Endothelial cell of umbilical vein (primary cell): ENCODE measurements at regions of chr6 and their contacts with region 1.

Region 1: GRCh38 chr6:27893059-27893835 is 18.9 kb downstream of the OR2B2 start:
- DNase-seq: peak; percentile 98
- H3K4me3 ChIP-seq: peak overlapping the region; percentile 65 to 98 (median 86)
- H3K27ac ChIP-seq: peak overlapping the region; percentile 94
- H3K4me1 ChIP-seq: peaks cover 22% of the 10 kb centered on the region
- H3K27me3 ChIP-seq: no peaks in the 10 kb centered on the region
- CTCF ChIP-seq: no peak
- POLR2A ChIP-seq: peak; percentile 96

Region 2: GRCh38 chr6:26031595-26032339 is 1861.5 kb before region 1 on chr6:
- CTCF ChIA-PET with region 1: interaction called, 4 read pairs
- POLR2A ChIA-PET with region 1: interaction called, 3 read pairs
- dilution Hi-C with region 1: no loop called
- intact Hi-C with region 1: loop called (anchors 5 kb)
- DNase-seq: peak; percentile 96
- H3K4me3 ChIP-seq: peak overlapping the region; percentile 45 to 78 (median 47)
- H3K27ac ChIP-seq: peak overlapping the region; percentile 88
- H3K4me1 ChIP-seq: peaks cover 33% of the 10 kb centered on the region
- H3K27me3 ChIP-seq: no peaks in the 10 kb centered on the region
- CTCF ChIP-seq: peak in 1 of 2 donors; percentile 29
- POLR2A ChIP-seq: peak; percentile 99

Region 3: GRCh38 chr6:27146706-27147505 is 746.3 kb before region 1 on chr6:
- CTCF ChIA-PET with region 1: interaction called, 3 read pairs
- POLR2A ChIA-PET with region 1: interaction called, 26 read pairs
- dilution Hi-C with region 1: no loop called
- intact Hi-C with region 1: loop called (anchors 1 kb)
- DNase-seq: peak; percentile 99
- H3K4me3 ChIP-seq: peak overlapping the region in 2 of 3 experiments; percentile 21 to 46
- H3K27ac ChIP-seq: peak overlapping the region; percentile 66
- H3K4me1 ChIP-seq: peaks cover 5% of the 10 kb centered on the region
- H3K27me3 ChIP-seq: peaks cover 0 to 1% of the 10 kb centered on the region in 2 experiments
- CTCF ChIP-seq: no peak
- POLR2A ChIP-seq: peak; percentile 95

Region 4: DNA sequence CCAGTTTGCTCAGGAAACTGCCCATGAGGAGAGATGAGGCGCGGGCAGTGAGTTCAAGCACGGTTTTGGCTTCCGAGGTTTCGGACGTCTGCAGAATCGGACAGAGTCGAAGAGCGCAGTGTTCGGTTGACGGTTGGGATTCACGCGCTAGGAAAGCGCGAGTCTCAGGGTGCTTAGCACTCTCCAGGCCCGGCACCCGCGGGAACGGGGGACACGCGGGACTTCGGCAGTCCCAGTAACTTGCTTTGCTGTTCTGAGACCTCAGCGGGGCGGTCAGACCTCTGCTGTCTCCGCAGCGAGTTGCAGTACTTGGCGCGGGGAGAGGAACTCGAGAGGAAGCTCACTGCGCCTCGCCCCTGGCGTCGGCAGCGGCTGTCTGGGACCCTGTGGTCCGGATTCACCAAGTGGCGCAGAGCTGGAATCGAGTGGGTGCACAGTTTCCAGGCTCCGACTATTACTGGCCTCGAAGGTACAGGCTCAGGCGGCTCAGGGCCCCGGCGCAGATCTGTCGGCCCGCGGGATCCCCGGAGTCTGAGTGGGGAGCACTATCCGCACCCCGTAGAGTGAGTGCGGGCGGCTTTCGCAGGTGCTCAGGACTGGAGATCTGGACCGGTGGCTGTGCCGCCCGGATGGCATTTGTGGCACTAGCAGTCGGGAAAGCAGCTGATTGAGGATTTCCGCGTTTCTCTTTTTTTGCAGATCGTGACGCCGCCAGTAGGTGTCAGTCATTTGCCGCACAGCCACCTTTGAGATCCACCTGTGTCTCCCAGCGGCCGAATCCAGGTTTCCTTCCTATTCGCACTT is 580.9 kb before region 1 on chr6 and contains the start of gene POM121L2:
- CTCF ChIA-PET with region 1: no interaction called
- POLR2A ChIA-PET with region 1: interaction called, 4 read pairs
- dilution Hi-C with region 1: no loop called
- intact Hi-C with region 1: loop called (anchors 1 kb)
- DNase-seq: peak; percentile 65
- H3K4me3 ChIP-seq: peak within 1 kb of the TSS; percentile 41 to 60 (median 51)
- H3K27ac ChIP-seq: no peak within 1 kb of the TSS
- H3K4me1 ChIP-seq: peaks cover 9% of the 10 kb centered on the region
- H3K27me3 ChIP-seq: peaks cover 14 to 20% of the 10 kb centered on the region in 2 experiments
- CTCF ChIP-seq: peak; percentile 50 to 69
- POLR2A ChIP-seq: no peak
- total RNA-seq, gene POM121L2: not detected in 2 replicates

Region 5: GRCh38 chr6:27772261-27773001 is 120.8 kb before region 1 on chr6:
- CTCF ChIA-PET with region 1: interaction called, 210 read pairs
- POLR2A ChIA-PET with region 1: interaction called, 10 read pairs
- dilution Hi-C with region 1: no loop called
- intact Hi-C with region 1: loop called (anchors 1 kb)
- DNase-seq: peak; percentile 77
- H3K4me3 ChIP-seq: no peak overlapping the region
- H3K27ac ChIP-seq: no peak overlapping the region
- H3K4me1 ChIP-seq: peaks cover 2% of the 10 kb centered on the region
- H3K27me3 ChIP-seq: peaks cover 16 to 20% of the 10 kb centered on the region in 2 experiments
- CTCF ChIP-seq: peak; percentile 92 to 99
- POLR2A ChIP-seq: no peak

Region 6: GRCh38 chr6:27838058-27838944 is 54.9 kb before region 1 on chr6:
- CTCF ChIA-PET with region 1: interaction called, 44 read pairs
- POLR2A ChIA-PET with region 1: interaction called, 82 read pairs
- dilution Hi-C with region 1: no loop called
- intact Hi-C with region 1: loop called (anchors 1 kb)
- DNase-seq: peak; percentile 100
- H3K4me3 ChIP-seq: peak overlapping the region; percentile 25 to 86 (median 59)
- H3K27ac ChIP-seq: peak overlapping the region; percentile 95
- H3K4me1 ChIP-seq: peaks cover 14% of the 10 kb centered on the region
- H3K27me3 ChIP-seq: no peaks in the 10 kb centered on the region
- CTCF ChIP-seq: no peak
- POLR2A ChIP-seq: peak; percentile 87

Region 7: DNA sequence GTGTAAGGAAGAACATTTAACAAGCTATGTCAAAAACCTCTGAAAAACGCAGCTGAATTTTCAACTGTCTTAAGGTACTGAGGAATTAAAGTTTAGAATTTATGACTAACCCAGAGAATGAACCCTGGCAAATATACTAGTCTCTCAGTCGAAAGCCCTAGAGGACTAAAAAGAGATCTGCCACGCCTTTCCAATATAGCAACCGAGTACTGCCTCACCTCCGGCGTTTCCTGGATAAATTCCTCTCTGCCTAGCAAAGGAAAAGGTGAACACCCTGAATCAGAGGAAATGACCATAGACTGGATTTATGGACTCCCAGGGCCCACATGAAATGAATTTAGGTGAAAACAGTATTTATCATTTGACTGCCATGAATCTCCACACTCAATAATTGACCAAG is 30.9 kb after region 1 on chr6:
- CTCF ChIA-PET with region 1: no interaction called
- POLR2A ChIA-PET with region 1: no interaction called
- dilution Hi-C with region 1: no loop called
- intact Hi-C with region 1: no loop called
- DNase-seq: no peak
- H3K4me3 ChIP-seq: no peak overlapping the region
- H3K27ac ChIP-seq: no peak overlapping the region
- H3K4me1 ChIP-seq: no peaks in the 10 kb centered on the region
- H3K27me3 ChIP-seq: peaks cover 0 to 6% of the 10 kb centered on the region in 2 experiments
- CTCF ChIP-seq: no peak
- POLR2A ChIP-seq: no peak

Region 8: DNA sequence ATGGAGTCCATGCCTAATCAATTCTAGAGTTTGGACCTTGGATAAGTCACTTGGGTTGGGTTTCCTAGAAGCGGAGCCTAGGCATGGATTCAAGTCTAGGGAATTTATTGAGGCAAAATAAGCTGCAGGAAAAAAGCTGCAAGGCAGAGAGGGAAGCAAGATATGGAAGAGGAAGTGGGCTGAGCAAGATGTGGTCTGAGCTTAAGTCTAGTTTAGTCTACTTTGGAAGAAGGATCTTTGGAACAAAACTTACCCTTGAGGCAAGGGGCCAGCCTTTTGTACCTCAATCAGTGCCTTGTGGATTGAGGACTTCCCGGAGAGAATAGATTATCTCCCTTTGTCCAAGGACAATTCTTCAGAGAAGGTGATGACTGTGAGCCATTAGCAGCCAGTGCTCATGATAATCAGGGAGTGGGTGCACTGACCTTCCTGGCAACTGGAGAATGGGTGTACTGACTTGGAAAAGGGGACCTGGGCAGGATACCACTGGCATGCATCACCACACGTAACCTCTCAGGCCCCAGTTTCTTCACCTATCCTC is 342.7 kb after region 1 on chr6:
- CTCF ChIA-PET with region 1: no interaction called
- POLR2A ChIA-PET with region 1: no interaction called
- dilution Hi-C with region 1: no loop called
- intact Hi-C with region 1: no loop called
- DNase-seq: no peak
- H3K4me3 ChIP-seq: no peak overlapping the region
- H3K27ac ChIP-seq: no peak overlapping the region
- H3K4me1 ChIP-seq: no peaks in the 10 kb centered on the region
- H3K27me3 ChIP-seq: no peaks in the 10 kb centered on the region
- CTCF ChIP-seq: no peak
- POLR2A ChIP-seq: no peak

Region 9: GRCh38 chr6:28335564-28336283 is 442.5 kb after region 1 on chr6 and contains the start of gene ZSCAN31:
- CTCF ChIA-PET with region 1: no interaction called
- POLR2A ChIA-PET with region 1: no interaction called
- dilution Hi-C with region 1: no loop called
- intact Hi-C with region 1: loop called (anchors 5 kb)
- DNase-seq: peak; percentile 98
- H3K4me3 ChIP-seq: peak within 1 kb of the TSS; percentile 70 to 79 (median 73)
- H3K27ac ChIP-seq: peak within 1 kb of the TSS; percentile 96
- H3K4me1 ChIP-seq: peaks cover 15% of the 10 kb centered on the region
- H3K27me3 ChIP-seq: no peaks in the 10 kb centered on the region
- CTCF ChIP-seq: no peak
- POLR2A ChIP-seq: peak; percentile 94
- total RNA-seq, gene ZSCAN31: 19.5 and 23.0 TPM in 2 replicates